Vagina (tissue), 2 donors: ENCODE measurements at regions of chr15 and their contacts with region 1.

Region 1: DNA sequence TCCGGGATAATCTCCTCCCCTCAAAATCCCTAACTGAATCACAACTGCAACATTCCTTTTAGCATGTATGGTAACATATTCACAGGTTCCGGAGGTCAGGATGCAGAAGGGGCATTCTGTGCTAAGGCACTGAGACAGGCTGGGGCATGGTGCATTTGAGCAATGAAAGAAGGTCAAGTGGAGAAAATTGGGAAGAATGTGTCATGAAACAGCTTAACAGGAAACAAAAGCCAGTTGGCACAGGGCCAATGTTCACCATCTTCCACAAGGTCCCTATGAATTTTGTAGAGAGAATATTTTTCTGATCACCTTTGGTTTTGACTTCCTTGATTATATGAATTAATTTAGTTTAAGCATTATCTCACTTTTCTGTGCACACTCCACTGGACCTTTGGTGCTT is 587.7 kb upstream of the NR2F2 start:
- DNase-seq: no peak
- H3K4me3 ChIP-seq: no peak overlapping the region
- H3K27ac ChIP-seq: no peak overlapping the region
- H3K4me1 ChIP-seq: no peaks in the 10 kb centered on the region
- H3K27me3 ChIP-seq: no peaks in the 10 kb centered on the region
- CTCF ChIP-seq: no peak
- POLR2A ChIP-seq: no peak

Region 2: GRCh38 chr15:96115642-96116041 is 372.8 kb after region 1 on chr15:
- intact Hi-C with region 1: no loop called
- DNase-seq: no peak
- H3K4me3 ChIP-seq: no peak overlapping the region
- H3K27ac ChIP-seq: no peak overlapping the region
- H3K4me1 ChIP-seq: no peaks in the 10 kb centered on the region
- H3K27me3 ChIP-seq: no peaks in the 10 kb centered on the region
- CTCF ChIP-seq: no peak
- POLR2A ChIP-seq: no peak

Region 3: DNA sequence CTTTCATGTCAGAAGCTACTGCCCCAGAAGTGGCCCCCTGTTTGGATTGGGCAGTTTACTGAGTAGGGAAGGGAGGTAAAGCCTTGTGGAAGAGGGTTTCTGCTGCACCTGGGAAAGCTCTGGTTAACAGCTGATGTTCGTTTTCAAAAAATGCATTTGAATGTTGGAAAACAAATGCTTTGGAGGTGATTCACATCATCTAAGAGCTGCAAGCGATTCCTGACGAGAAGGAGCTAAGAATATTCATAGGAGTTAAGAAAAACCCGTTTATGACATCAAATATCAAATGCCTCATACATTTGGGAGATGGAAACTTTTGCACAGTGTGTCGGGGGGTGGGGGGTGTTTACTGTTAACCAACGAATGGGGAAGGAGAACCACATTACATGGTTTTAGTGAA is 403.9 kb after region 1 on chr15:
- intact Hi-C with region 1: loop called (anchors 5 kb)
- DNase-seq: no peak
- H3K4me3 ChIP-seq: no peak overlapping the region
- H3K27ac ChIP-seq: no peak overlapping the region
- H3K4me1 ChIP-seq: peaks cover 22% of the 10 kb centered on the region
- H3K27me3 ChIP-seq: no peaks in the 10 kb centered on the region
- CTCF ChIP-seq: no peak
- POLR2A ChIP-seq: no peak